Ascending aorta (tissue), 2 donors: ENCODE measurements at regions of chr4 and their contacts with region 1.

Region 1: DNA sequence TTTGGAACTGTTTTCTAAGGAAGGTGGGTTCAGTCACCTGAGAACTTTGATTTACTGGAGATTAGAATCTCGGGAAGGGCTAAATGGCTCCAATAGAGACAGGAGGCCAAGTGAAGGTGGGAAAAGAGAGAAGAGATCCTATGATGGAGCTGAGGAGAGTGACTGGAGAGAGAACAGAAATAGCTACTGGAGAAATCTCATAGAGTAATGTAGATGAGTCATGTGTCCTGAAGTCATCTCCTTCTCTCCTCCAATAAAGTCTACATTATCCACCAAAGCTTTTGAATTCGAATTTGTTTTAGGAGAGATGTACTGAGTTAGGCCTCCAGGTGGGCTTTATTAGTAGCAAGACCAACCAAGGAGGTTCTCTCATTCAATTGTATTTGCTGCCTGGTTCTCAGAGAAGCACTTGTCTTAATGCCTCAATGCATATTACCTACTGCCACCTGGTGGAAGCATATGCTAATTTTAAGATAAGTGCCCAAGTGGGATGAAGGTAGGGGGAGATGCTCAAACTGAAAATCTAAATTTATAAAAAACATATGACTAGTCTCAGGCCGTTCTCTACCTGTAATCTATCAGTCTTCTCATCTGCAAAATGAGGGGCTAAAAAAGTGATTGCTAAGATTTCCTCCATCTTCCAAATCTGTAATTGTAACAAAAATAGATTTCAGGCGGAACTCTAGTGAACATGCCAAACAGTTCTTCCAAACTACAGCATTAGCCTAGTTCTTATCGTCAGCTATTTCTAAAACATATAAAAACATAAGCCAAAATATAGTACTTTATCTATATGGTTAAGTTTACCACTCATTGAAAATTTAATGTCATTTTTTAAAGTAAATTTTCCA is 24.4 kb downstream of the TXK start:
- DNase-seq: no peak
- H3K4me3 ChIP-seq: no peak overlapping the region
- H3K27ac ChIP-seq: no peak overlapping the region
- H3K4me1 ChIP-seq: no peaks in the 10 kb centered on the region
- H3K27me3 ChIP-seq: no peaks in the 10 kb centered on the region
- CTCF ChIP-seq: peak in 2 of 3 experiments; percentile 25 to 51

Region 2: GRCh38 chr4:48127682-48128394 is 18.2 kb after region 1 on chr4:
- intact Hi-C with region 1: loop called (anchors 1 kb)
- DNase-seq: peak in 1 of 2 donors; percentile 69
- H3K4me3 ChIP-seq: peak overlapping the region; percentile 3 to 31
- H3K27ac ChIP-seq: peak overlapping the region; percentile 67 to 82
- H3K4me1 ChIP-seq: peaks cover 0 to 12% of the 10 kb centered on the region in 2 donors
- H3K27me3 ChIP-seq: no peaks in the 10 kb centered on the region
- CTCF ChIP-seq: peak; percentile 8 to 53 (median 42)

Region 3: DNA sequence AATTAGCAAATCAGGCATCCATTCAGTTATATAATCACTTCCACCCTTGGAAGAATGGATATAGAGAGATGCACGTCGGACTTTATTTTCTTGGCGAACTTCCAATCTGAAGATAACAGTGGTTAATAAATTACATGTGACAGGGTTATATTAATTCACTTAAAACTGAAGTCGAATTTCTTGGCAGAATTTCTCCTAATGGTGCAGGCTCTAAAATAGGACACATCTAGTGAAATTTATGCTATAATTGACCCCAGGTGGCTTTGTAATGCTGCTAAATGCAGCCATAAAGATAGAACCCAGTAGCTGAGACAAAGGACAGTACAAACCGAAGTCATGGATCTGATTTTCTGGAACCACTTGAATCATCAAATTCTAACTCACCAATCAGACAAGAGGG is 352.7 kb after region 1 on chr4:
- intact Hi-C with region 1: no loop called
- DNase-seq: no peak
- H3K4me3 ChIP-seq: no peak overlapping the region
- H3K27ac ChIP-seq: no peak overlapping the region
- H3K4me1 ChIP-seq: no peaks in the 10 kb centered on the region
- H3K27me3 ChIP-seq: no peaks in the 10 kb centered on the region
- CTCF ChIP-seq: no peak